Naive thymus-derived CD4-positive, alpha-beta T cell (primary cell): ENCODE measurements at regions of chrX and their contacts with region 1.

Region 1: DNA sequence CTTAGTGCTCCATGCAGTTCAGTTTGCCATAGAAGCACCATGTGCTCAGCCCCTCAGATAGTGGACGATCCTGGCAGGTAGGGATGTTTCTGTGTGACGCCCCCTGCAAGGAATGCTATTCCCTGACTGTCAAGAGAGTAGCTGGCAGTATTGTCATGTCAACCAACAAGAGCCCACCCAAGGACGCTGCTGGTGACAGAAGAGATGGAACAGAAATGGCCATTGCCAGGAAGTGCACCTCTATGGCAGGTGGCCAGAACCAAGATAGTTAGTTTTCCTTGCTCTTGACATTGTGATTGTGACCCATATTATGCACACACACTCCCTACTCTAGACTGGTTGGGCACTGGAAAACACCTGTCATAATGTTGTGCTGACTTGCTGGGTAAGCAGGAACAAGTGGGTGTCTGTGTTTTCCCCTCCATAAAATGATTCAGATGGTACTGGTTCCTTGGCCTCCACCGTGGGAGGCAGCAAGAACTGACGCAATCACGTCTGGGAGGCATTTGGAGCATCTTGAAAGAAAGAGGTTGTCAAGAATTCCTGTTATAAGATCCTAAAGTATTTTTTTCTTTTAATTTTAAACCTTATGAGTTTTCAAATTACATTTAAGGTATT is 507.9 kb downstream of the MID1IP1 start:
- DNase-seq: peak in 7 of 9 donors; percentile 23 to 81 (median 43)
- ATAC-seq: peak; percentile 83
- H3K4me3 ChIP-seq: peak overlapping the region; percentile 41
- H3K4me3 Mint-ChIP-seq: peak overlapping the region; percentile 33 to 91 (median 76)
- H3K27ac ChIP-seq: peak overlapping the region; percentile 84
- H3K27ac Mint-ChIP-seq: peak overlapping the region; percentile 95 to 100 (median 99)
- H3K4me1 ChIP-seq: peaks cover 18 to 42% of the 10 kb centered on the region in 2 donors
- H3K4me1 Mint-ChIP-seq: peaks cover 28 to 81% (median 74%) of the 10 kb centered on the region in 7 donors
- H3K27me3 ChIP-seq: no peaks in the 10 kb centered on the region
- H3K27me3 Mint-ChIP-seq: no peaks in the 10 kb centered on the region

Region 2: GRCh38 chrX:39327255-39327654 is 18.1 kb after region 1 on chrX:
- CTCF ChIA-PET with region 1: interaction called, 8 read pairs
- POLR2A ChIA-PET with region 1: interaction called, 10 read pairs
- intact Hi-C with region 1: loop called in 1 of 2 experiments (anchors 2 kb)
- DNase-seq: peak in 7 of 9 donors; percentile 34 to 69 (median 42)
- ATAC-seq: peak; percentile 64
- H3K4me3 ChIP-seq: peak overlapping the region; percentile 30
- H3K4me3 Mint-ChIP-seq: peak overlapping the region in 8 of 10 donors; percentile 29 to 75 (median 52)
- H3K27ac ChIP-seq: peak overlapping the region; percentile 33
- H3K27ac Mint-ChIP-seq: peak overlapping the region; percentile 40 to 92 (median 79)
- H3K4me1 ChIP-seq: peaks cover 0 to 13% of the 10 kb centered on the region in 2 donors
- H3K4me1 Mint-ChIP-seq: peaks cover 15 to 61% (median 52%) of the 10 kb centered on the region in 7 donors
- H3K27me3 ChIP-seq: no peaks in the 10 kb centered on the region
- H3K27me3 Mint-ChIP-seq: no peaks in the 10 kb centered on the region

Region 3: GRCh38 chrX:39336671-39337311 is 27.7 kb after region 1 on chrX:
- CTCF ChIA-PET with region 1: interaction called, 8 read pairs
- POLR2A ChIA-PET with region 1: interaction called, 12 read pairs
- intact Hi-C with region 1: loop called in 1 of 2 experiments (anchors 2 kb)
- DNase-seq: peak in 2 of 9 donors; percentile 9 to 14
- ATAC-seq: peak; percentile 52
- H3K4me3 ChIP-seq: no peak overlapping the region
- H3K4me3 Mint-ChIP-seq: peak overlapping the region; percentile 51 to 73 (median 66)
- H3K27ac ChIP-seq: peak overlapping the region; percentile 46
- H3K27ac Mint-ChIP-seq: peak overlapping the region; percentile 73 to 97 (median 91)
- H3K4me1 ChIP-seq: peaks cover 16 to 22% of the 10 kb centered on the region in 2 donors
- H3K4me1 Mint-ChIP-seq: peaks cover 11 to 53% (median 38%) of the 10 kb centered on the region in 7 donors
- H3K27me3 ChIP-seq: no peaks in the 10 kb centered on the region
- H3K27me3 Mint-ChIP-seq: no peaks in the 10 kb centered on the region

Region 4: DNA sequence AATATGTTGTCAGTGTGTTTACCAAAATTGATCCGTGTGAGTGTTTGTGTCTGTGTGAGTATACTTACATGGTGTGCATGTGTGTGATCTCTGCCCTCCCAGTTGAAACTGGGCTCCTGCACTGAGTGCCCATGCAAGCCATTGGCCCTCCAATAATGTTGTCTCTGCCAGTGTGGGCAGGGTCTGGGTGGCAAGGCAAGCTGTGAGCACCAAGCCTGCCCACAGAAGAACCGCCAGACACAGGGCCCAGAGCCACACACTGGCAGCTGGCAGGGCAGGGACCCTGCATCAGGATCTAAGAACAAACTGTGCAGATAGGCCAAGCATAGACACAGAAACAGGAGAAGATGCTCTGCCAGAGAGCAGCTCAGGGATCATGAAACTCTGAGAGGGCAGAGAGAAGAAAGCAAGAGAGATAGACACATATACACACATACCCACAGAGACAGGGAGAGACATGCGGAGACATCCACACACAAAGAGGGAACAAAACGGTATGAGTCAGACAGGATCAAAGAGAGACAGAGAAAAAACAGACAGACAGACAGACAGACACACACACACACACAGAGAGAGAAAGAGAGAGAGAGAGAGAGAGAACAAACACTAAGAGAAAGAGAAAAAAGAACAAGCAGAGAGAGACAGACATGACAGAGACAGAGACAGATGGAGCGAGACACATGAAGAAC is 47.1 kb after region 1 on chrX:
- CTCF ChIA-PET with region 1: no interaction called
- POLR2A ChIA-PET with region 1: no interaction called
- intact Hi-C with region 1: loop called in 1 of 2 experiments (anchors 5 kb)
- DNase-seq: no peak
- ATAC-seq: no peak
- H3K4me3 ChIP-seq: no peak overlapping the region
- H3K4me3 Mint-ChIP-seq: peak overlapping the region in 4 of 10 donors; percentile 0 to 40 (median 16)
- H3K27ac ChIP-seq: no peak overlapping the region
- H3K27ac Mint-ChIP-seq: peak overlapping the region in 4 of 9 donors; percentile 22 to 81 (median 73)
- H3K4me1 ChIP-seq: no peaks in the 10 kb centered on the region
- H3K4me1 Mint-ChIP-seq: peaks cover 4 to 17% (median 8%) of the 10 kb centered on the region in 7 donors
- H3K27me3 ChIP-seq: no peaks in the 10 kb centered on the region
- H3K27me3 Mint-ChIP-seq: no peaks in the 10 kb centered on the region